ENCODE measurements at regions of chr10 and their contacts with region 1.

Region 1: DNA sequence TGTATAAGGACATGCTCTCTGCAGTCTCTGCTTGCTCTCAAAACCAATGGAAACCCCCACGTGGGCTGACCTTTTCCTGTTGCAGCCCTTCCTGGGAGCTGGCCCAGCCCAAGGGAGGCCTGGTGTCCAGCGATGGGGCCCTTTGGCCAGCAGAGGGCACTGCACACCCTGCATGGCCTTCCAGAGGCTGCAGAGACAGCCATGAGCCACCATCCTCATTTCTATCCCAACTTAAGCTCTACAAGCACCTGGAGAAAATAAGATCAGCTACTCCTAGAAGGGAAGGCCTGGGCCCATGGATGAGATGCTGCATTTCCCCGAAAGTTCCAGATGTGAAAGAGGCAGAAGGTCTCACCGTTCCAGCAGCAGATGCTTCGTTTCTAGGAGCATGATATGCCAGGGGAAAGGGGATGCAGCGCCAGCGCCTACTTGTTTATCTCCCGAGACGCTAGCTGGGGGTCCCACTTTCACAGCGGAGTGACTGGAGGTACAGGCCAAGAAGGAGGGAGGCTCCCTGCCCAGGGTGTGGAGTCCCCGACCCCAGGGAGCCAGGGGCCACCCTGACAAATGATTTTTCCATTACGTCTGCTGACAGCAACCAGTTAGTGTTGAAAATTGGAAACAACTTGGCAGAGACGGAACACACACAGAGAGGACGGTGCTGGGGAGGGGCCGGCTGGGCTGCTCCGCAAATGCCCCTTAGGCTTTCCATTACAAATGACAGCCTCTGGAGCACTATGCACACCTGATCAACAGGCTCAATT is 106.4 kb downstream of the ZRANB1 start:
- H3K4me3 Mint-ChIP-seq: no peak overlapping the region
- H3K27ac Mint-ChIP-seq: no peak overlapping the region
- H3K4me1 Mint-ChIP-seq: peaks cover 51% of the 10 kb centered on the region
- H3K27me3 Mint-ChIP-seq: no peaks in the 10 kb centered on the region

Region 2: DNA sequence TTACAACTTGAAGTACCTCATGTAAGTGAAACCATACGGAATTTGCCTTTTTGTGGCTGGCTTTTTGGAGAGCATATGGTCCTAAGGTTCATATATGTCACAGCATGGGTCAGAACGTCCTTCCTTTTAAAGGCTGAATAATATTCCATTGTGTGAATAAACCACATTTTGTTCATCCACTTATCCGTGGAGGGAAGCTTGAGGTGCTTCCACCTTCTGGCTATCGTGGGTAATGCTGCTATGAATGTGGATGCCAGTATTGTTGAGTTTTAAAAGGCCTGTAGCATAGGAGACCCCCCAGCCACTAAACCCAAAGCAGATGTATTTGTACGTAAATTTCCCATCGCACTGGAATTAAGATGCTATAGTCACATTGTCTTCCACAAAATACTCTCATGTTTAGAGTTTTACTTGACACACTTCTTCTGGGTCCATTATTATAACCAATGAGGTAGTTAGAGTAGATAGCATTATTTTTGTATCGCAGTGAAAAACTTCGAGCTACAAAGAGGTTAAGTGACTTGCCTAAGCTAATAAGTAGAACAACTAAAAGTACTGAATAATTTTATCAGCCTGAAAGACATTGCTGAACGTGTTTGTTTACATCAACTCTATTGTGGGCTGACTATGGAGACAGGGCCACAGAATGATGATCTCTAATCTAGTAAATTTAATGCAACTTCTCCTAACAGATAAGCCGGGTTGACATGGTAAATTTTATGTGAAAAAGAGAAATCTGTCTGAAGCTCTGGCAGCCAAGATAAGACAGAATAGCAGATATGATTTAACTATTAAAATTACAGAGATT is 295.0 kb after region 1 on chr10:
- intact Hi-C with region 1: loop called (anchors 5 kb)
- H3K4me3 Mint-ChIP-seq: no peak overlapping the region
- H3K27ac Mint-ChIP-seq: no peak overlapping the region
- H3K4me1 Mint-ChIP-seq: no peaks in the 10 kb centered on the region
- H3K27me3 Mint-ChIP-seq: peaks cover 6% of the 10 kb centered on the region